Tibial artery (tissue), 4 donors: ENCODE measurements at regions of chr7 and their contacts with region 1.

Region 1: GRCh38 chr7:992709-993607 is 10.0 kb downstream of the CYP2W1 start:
- DNase-seq: peak; percentile 96 to 97
- H3K4me3 ChIP-seq: no peak overlapping the region
- H3K27ac ChIP-seq: no peak overlapping the region
- H3K4me1 ChIP-seq: peaks cover 0 to 22% (median 5%) of the 10 kb centered on the region in 4 donors
- H3K27me3 ChIP-seq: peaks cover 0 to 42% of the 10 kb centered on the region in 2 donors
- CTCF ChIP-seq: peak; percentile 99 to 100

Region 2: GRCh38 chr7:1065263-1066260 is 72.6 kb after region 1 on chr7:
- intact Hi-C with region 1: loop called (anchors 1 kb)
- DNase-seq: peak; percentile 82 to 88
- H3K4me3 ChIP-seq: peak overlapping the region; percentile 21 to 23
- H3K27ac ChIP-seq: no peak overlapping the region
- H3K4me1 ChIP-seq: peaks cover 0 to 22% (median 15%) of the 10 kb centered on the region in 4 donors
- H3K27me3 ChIP-seq: no peaks in the 10 kb centered on the region
- CTCF ChIP-seq: peak; percentile 96 to 98

Region 3: GRCh38 chr7:1144269-1144771 is 151.4 kb after region 1 on chr7:
- intact Hi-C with region 1: loop called (anchors 2 kb)
- DNase-seq: peak in 1 of 2 donors; percentile 77
- H3K4me3 ChIP-seq: no peak overlapping the region
- H3K27ac ChIP-seq: no peak overlapping the region
- H3K4me1 ChIP-seq: peaks cover 0 to 8% (median 6%) of the 10 kb centered on the region in 4 donors
- H3K27me3 ChIP-seq: no peaks in the 10 kb centered on the region
- CTCF ChIP-seq: peak; percentile 54 to 57

Region 4: DNA sequence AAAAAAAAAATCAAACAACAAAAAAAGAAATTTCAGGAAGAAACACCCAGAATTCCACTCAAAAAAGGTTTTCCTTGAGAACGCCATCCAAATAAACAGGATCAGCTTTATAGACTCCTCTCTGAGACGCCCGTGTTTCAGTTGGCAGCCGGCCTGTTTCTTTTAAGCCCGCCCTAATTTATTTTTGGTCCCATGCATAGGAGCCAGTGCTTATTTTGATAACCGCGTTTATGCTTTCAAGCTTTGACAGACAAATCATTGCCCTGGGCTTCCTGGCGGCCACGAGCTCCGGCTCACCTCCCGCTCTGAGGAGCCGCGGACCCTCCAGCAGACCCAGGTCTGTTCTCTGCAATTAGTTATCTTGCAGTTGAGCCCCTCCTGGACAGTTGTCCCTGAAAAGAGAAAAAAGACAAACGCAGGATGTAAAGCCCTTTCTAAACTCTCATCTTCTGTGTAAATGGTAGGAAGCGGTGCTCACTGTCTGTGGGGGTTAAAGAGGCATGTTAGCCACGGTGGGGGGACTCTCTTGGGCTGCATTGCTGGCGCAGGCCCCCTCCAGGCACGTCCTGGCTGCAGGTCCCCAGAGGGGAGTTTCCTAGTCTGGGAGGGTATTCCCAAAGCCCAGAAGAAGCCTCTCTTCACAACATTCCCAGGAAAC is 217.5 kb after region 1 on chr7:
- intact Hi-C with region 1: no loop called
- DNase-seq: peak in 1 of 2 donors; percentile 70
- H3K4me3 ChIP-seq: no peak overlapping the region
- H3K27ac ChIP-seq: no peak overlapping the region
- H3K4me1 ChIP-seq: peaks cover 0 to 19% (median 12%) of the 10 kb centered on the region in 4 donors
- H3K27me3 ChIP-seq: peaks cover 0 to 68% of the 10 kb centered on the region in 2 donors
- CTCF ChIP-seq: no peak